Activated T-helper 1 cell treated with anti-CD3 and anti-CD28 coated beads, Interleukin-12 subunit alpha, Interleukin-12 subunit beta, Interleukin-2, Interleukin-4 antibody, amounts not matched to agents 30 ng/mL and 10 ng/mL and 1 ng/mL, durations not matched to agents 14 hours and 24 hours and 36 hours (primary cell): ENCODE measurements at regions of chr16 and their contacts with region 1.

Region 1: DNA sequence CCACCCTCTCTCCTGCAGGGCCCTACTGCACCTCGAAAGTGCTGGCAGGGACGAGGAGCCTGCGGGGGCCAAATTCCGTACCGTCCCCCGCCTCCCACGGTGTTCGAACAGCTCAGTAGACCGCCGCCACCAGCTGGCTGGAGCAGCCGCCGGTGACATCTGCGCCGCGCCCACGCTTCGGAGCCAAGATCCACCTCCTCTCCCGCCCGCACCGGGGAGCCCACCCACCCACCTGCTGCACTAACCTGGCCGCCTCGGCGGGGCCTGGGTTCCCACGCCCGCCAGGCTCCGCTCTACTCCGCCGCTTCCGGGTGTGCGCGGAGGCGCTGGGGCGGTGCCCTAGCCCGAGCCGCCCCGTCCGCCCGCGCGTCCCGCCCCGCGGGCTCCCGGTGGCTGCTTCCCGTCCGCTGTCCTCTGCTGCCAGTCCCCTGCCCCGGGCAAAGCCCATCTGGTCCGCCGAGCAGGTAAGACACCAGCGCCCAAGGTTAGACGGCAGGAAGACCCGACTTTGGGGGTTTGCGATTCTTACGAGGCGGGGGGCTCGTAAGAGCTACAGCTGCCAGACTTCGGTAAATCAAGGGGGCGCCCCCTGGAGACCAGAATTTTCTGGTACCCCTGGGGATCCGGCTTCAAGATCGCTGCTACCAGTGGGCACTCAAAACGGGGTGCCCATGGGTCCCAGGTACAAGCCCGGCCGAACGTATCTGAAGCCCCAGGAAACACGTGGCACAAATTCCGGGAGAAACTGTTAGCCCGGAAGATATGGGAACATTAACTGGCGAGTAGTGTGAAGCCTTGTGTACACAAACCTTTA is at the starts of genes FBXL8 and TRADD:
- DNase-seq: peak; percentile 84
- H3K4me3 Mint-ChIP-seq: peak within 1 kb of the TSS; percentile 91
- H3K27ac Mint-ChIP-seq: peak within 1 kb of the TSS; percentile 92
- H3K4me1 Mint-ChIP-seq: peaks cover 45% of the 10 kb centered on the region
- H3K27me3 Mint-ChIP-seq: peaks cover 2% of the 10 kb centered on the region
- total RNA-seq, gene FBXL8: 19.3 and 22.4 TPM in 2 replicates
- total RNA-seq, gene TRADD: 29.0 TPM in 2 replicates

Region 2: GRCh38 chr16:66635406-66635805 is 524.4 kb before region 1 on chr16:
- intact Hi-C with region 1: no loop called
- DNase-seq: no peak
- H3K4me3 Mint-ChIP-seq: no peak overlapping the region
- H3K27ac Mint-ChIP-seq: no peak overlapping the region
- H3K4me1 Mint-ChIP-seq: no peaks in the 10 kb centered on the region
- H3K27me3 Mint-ChIP-seq: peaks cover 4% of the 10 kb centered on the region

Region 3: GRCh38 chr16:66954097-66954659 is 205.6 kb before region 1 on chr16:
- intact Hi-C with region 1: loop called (anchors 1 kb)
- DNase-seq: peak; percentile 71
- H3K4me3 Mint-ChIP-seq: no peak overlapping the region
- H3K27ac Mint-ChIP-seq: peak overlapping the region; percentile 18
- H3K4me1 Mint-ChIP-seq: peaks cover 30% of the 10 kb centered on the region
- H3K27me3 Mint-ChIP-seq: peaks cover 16% of the 10 kb centered on the region

Region 4: GRCh38 chr16:67017810-67018488 is 141.9 kb before region 1 on chr16:
- intact Hi-C with region 1: loop called (anchors 1 kb)
- DNase-seq: peak; percentile 85
- H3K4me3 Mint-ChIP-seq: peak overlapping the region; percentile 7
- H3K27ac Mint-ChIP-seq: peak overlapping the region; percentile 40
- H3K4me1 Mint-ChIP-seq: peaks cover 40% of the 10 kb centered on the region
- H3K27me3 Mint-ChIP-seq: peaks cover 3% of the 10 kb centered on the region

Region 5: GRCh38 chr16:67084345-67085028 is 75.3 kb before region 1 on chr16:
- intact Hi-C with region 1: no loop called
- DNase-seq: no peak
- H3K4me3 Mint-ChIP-seq: no peak overlapping the region
- H3K27ac Mint-ChIP-seq: no peak overlapping the region
- H3K4me1 Mint-ChIP-seq: peaks cover 21% of the 10 kb centered on the region
- H3K27me3 Mint-ChIP-seq: no peaks in the 10 kb centered on the region

Region 6: GRCh38 chr16:67098599-67098998 is 61.2 kb before region 1 on chr16:
- intact Hi-C with region 1: no loop called
- DNase-seq: no peak
- H3K4me3 Mint-ChIP-seq: no peak overlapping the region
- H3K27ac Mint-ChIP-seq: no peak overlapping the region
- H3K4me1 Mint-ChIP-seq: peaks cover 18% of the 10 kb centered on the region
- H3K27me3 Mint-ChIP-seq: no peaks in the 10 kb centered on the region

Region 7: GRCh38 chr16:67109407-67110135 is 50.2 kb before region 1 on chr16 and contains the start of gene PHAF1:
- intact Hi-C with region 1: loop called (anchors 1 kb)
- DNase-seq: peak; percentile 93
- H3K4me3 Mint-ChIP-seq: peak within 1 kb of the TSS; percentile 96
- H3K27ac Mint-ChIP-seq: peak within 1 kb of the TSS; percentile 87
- H3K4me1 Mint-ChIP-seq: peaks cover 45% of the 10 kb centered on the region
- H3K27me3 Mint-ChIP-seq: no peaks in the 10 kb centered on the region
- total RNA-seq, gene PHAF1: 20.5 and 20.6 TPM in 2 replicates

Region 8: DNA sequence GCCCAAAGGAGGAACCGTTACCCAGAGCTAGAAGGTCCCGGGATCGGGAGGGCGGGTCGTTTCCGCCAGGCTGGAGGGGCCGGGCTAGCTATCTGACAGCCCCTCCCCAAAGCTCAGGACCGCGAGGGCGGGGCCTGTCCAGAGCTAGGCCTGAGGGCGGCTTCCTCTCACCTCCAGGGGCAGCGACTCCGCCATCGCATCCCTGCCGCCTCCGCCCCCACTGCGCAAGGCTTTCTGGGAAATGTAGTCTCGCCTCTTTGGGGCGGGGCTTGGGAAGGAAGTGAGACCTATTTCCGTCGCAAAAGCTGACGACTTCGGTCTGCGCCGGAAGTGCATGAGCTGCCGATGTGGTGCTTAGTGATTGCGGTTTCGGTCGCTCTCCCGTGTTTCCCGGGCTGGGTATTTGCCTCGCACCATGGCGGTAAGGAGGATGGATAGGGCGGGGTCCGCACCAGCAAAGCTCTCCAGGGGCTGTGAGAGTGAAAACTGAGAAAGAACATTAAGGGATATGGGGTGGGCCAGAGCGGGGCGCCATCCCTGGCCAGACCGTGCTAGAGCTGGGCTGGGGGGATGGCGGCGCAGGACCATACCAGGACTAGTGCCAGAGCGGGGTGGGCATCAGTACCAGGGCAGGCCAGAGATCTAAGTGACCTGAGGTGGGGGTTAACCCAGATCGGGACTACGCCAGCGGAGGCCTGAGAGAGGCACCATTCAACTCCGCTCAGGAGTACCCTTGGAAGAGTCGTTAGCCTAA is 67.2 kb after region 1 on chr16 and contains the start of gene TMEM208:
- intact Hi-C with region 1: loop called (anchors 2 kb)
- DNase-seq: peak; percentile 99
- H3K4me3 Mint-ChIP-seq: peak within 1 kb of the TSS; percentile 98
- H3K27ac Mint-ChIP-seq: peak within 1 kb of the TSS; percentile 94
- H3K4me1 Mint-ChIP-seq: peaks cover 43% of the 10 kb centered on the region
- H3K27me3 Mint-ChIP-seq: no peaks in the 10 kb centered on the region
- total RNA-seq, gene TMEM208: 68.5 and 72.4 TPM in 2 replicates

Region 9: GRCh38 chr16:67327743-67328142 is 167.9 kb after region 1 on chr16:
- intact Hi-C with region 1: no loop called
- DNase-seq: no peak
- H3K4me3 Mint-ChIP-seq: no peak overlapping the region
- H3K27ac Mint-ChIP-seq: no peak overlapping the region
- H3K4me1 Mint-ChIP-seq: peaks cover 5% of the 10 kb centered on the region
- H3K27me3 Mint-ChIP-seq: peaks cover 41% of the 10 kb centered on the region